ENCODE measurements at regions of chr14 and their contacts with region 1.

Region 1: GRCh38 chr14:76767681-76768656 is 6.7 kb downstream of the VASH1 start:
- DNase-seq: peak; percentile 91
- H3K4me3 Mint-ChIP-seq: peak overlapping the region; percentile 65
- H3K27ac Mint-ChIP-seq: peak overlapping the region; percentile 69
- H3K4me1 Mint-ChIP-seq: peaks cover 27% of the 10 kb centered on the region
- H3K27me3 Mint-ChIP-seq: peaks cover 21% of the 10 kb centered on the region

Region 2: GRCh38 chr14:76271041-76271755 is 496.8 kb before region 1 on chr14:
- intact Hi-C with region 1: no loop called
- DNase-seq: no peak
- H3K4me3 Mint-ChIP-seq: no peak overlapping the region
- H3K27ac Mint-ChIP-seq: no peak overlapping the region
- H3K4me1 Mint-ChIP-seq: no peaks in the 10 kb centered on the region
- H3K27me3 Mint-ChIP-seq: peaks cover 5% of the 10 kb centered on the region

Region 3: GRCh38 chr14:76812211-76813044 is 44.5 kb after region 1 on chr14 and contains the start of gene ANGEL1:
- intact Hi-C with region 1: loop called (anchors 1 kb)
- DNase-seq: peak; percentile 99
- H3K4me3 Mint-ChIP-seq: peak within 1 kb of the TSS; percentile 98
- H3K27ac Mint-ChIP-seq: peak within 1 kb of the TSS; percentile 91
- H3K4me1 Mint-ChIP-seq: peaks cover 21% of the 10 kb centered on the region
- H3K27me3 Mint-ChIP-seq: no peaks in the 10 kb centered on the region
- total RNA-seq, gene ANGEL1: 16.4 and 17.2 TPM in 2 replicates

Measured in activated CD4-positive, alpha-beta T cell treated with anti-CD3 and anti-CD28 coated beads, Interleukin-2, amount 10 ng/mL, durations not matched to agents 24 days and 14 days (primary cell).